MCF 10A (cell line): ENCODE measurements at regions of chr17 and their contacts with region 1.

Region 1: DNA sequence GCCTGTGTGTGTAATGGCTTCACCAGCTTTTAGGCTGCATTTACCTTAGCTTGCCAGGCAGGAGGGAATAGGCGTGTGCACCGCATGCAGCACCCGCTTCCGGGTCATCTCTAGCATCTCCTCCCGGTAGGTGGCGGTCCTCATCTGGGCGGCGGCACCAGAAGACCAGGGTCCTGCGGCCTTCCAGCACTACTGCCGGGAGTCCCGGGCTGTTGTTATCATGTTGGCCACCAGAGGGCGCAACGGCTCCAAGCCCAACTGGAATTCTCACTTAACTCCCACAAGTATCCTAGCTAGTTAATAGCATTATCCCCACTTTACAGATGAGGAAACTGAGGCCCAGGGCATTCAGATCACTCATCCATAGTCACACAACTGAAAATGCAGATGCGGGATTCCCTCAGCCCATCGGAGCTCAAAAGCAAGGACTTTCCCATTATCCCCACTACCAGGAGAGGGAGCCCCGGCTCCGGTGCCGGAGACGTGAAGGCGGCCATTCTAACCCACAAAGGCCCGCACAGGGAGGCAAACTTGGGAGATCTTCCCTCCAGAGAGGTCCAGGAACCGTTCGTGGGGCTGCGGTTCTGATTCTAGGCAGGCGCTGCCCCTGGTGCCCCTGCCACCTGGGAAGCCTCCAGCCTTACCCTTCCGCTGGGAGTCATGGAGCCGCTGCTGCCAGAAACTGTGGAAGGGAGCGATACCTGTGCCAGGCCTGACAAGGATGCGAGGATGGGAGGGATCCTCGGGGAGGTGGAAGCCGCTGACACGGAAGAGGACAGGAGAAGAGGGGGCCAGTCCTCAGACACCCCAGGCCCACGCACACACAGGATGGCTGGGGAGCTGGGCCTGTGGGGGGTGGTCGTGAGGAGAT is 23.9 kb downstream of the LGALS9 start:
- DNase-seq: peak; percentile 65
- H3K4me3 Mint-ChIP-seq: no peak overlapping the region
- H3K27ac Mint-ChIP-seq: no peak overlapping the region
- H3K4me1 Mint-ChIP-seq: no peaks in the 10 kb centered on the region
- H3K27me3 Mint-ChIP-seq: peaks cover 13% of the 10 kb centered on the region
- CTCF ChIP-seq: peak; percentile 93

Region 2: DNA sequence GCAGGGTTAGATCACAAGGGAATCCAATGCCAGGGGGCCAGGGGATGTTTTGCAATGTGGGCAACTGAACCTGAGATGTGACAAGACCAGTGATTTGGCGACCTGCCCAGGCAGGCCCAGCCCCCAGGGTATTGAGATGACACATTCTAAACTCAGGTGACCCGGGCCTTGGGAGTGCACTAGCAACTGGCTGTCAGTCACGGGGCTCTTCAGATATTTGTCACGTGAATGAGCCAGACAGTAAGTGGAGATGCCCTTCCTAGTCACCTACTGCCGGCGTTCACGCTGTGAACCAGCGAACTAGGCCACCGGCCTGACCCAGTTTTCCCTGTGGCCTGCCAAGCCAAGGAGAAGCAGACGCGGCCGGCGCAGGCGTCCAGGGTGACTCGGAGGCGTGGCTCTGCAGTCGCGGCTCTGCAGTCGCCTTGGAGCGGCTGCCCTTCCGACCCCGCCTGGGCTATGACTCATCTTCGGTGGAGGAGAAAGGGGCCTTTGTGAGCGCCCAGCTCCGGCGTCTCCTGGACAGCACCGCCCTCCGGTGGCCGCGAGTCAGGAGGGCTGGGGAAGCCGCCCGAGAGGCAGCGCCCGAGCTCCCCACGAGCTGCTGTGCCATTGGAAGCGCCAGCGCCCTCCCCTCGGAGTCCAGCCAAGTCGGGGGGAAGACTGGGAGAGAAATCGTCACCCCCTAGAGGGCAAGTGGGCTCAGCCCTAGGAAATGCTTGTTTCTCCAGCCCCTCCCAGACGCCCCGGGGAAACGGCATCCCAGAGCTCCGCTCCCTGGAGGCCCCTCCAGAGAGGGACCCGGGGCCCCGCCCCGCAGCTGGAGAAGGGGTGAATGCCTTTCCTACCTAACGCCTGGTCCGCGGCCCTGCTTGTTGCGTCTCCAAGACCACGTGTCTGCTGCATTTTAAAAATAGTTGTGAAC is 322.1 kb before region 1 on chr17:
- CTCF ChIA-PET with region 1: interaction called, 6 read pairs
- POLR2A ChIA-PET with region 1: no interaction called
- intact Hi-C with region 1: loop called (anchors 1 kb)
- DNase-seq: peak; percentile 98
- H3K4me3 Mint-ChIP-seq: peak overlapping the region; percentile 71
- H3K27ac Mint-ChIP-seq: peak overlapping the region; percentile 79
- H3K4me1 Mint-ChIP-seq: peaks cover 34% of the 10 kb centered on the region
- H3K27me3 Mint-ChIP-seq: no peaks in the 10 kb centered on the region
- CTCF ChIP-seq: peak; percentile 98

Region 3: DNA sequence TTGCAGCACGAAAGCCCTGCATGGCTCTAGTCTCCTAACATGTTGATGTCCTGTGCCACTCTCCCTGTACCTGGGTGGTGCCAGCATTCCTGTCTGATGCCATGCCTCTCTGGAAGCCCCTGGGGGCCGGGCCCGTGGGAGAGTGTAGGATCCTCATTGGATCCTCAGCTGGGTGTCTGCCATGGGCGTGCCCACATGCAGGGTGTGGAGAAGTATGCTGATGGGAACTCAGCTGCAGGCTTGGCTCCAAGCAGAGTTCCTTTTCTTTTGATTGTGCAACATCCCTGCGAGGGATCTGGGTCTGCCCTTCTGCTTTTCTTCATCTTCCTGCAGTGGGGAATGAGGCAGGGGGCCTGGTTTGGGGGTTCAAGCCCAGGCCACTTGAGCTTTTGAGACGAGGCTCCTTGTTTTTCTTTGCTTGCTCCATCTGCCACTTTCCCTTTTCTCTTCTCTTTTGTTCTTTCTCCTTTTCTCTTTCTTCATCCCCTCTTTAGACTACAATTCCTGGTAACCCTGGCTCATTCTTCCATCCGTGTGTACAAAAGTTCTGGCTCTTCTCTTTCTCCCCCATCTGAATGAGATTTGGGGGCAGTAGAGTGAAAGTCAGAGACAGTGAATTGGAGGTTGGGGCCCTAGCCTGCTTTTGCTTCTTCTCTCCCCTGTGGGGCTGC is 165.7 kb before region 1 on chr17:
- CTCF ChIA-PET with region 1: no interaction called
- POLR2A ChIA-PET with region 1: no interaction called
- intact Hi-C with region 1: no loop called
- DNase-seq: peak; percentile 87
- H3K4me3 Mint-ChIP-seq: peak overlapping the region; percentile 1
- H3K27ac Mint-ChIP-seq: peak overlapping the region; percentile 20
- H3K4me1 Mint-ChIP-seq: peaks cover 27% of the 10 kb centered on the region
- H3K27me3 Mint-ChIP-seq: no peaks in the 10 kb centered on the region
- CTCF ChIP-seq: no peak

Region 4: GRCh38 chr17:27552469-27552779 is 102.5 kb before region 1 on chr17:
- CTCF ChIA-PET with region 1: no interaction called
- POLR2A ChIA-PET with region 1: no interaction called
- intact Hi-C with region 1: no loop called
- DNase-seq: peak; percentile 94
- H3K4me3 Mint-ChIP-seq: no peak overlapping the region
- H3K27ac Mint-ChIP-seq: peak overlapping the region; percentile 20
- H3K4me1 Mint-ChIP-seq: peaks cover 30% of the 10 kb centered on the region
- H3K27me3 Mint-ChIP-seq: no peaks in the 10 kb centered on the region
- CTCF ChIP-seq: no peak

Region 5: GRCh38 chr17:27630607-27631410 is 24.1 kb before region 1 on chr17 and contains the start of gene LGALS9:
- CTCF ChIA-PET with region 1: interaction called, 19 read pairs
- POLR2A ChIA-PET with region 1: no interaction called
- intact Hi-C with region 1: no loop called
- DNase-seq: no peak
- H3K4me3 Mint-ChIP-seq: no peak within 1 kb of the TSS
- H3K27ac Mint-ChIP-seq: peak within 1 kb of the TSS; percentile 5
- H3K4me1 Mint-ChIP-seq: peaks cover 23% of the 10 kb centered on the region
- H3K27me3 Mint-ChIP-seq: no peaks in the 10 kb centered on the region
- CTCF ChIP-seq: no peak
- total RNA-seq, gene LGALS9: 0.44 and 0.54 TPM in 2 replicates

Region 6: GRCh38 chr17:27666831-27667560 is 12.1 kb after region 1 on chr17:
- CTCF ChIA-PET with region 1: interaction called, 63 read pairs
- POLR2A ChIA-PET with region 1: no interaction called
- intact Hi-C with region 1: no loop called
- DNase-seq: no peak
- H3K4me3 Mint-ChIP-seq: no peak overlapping the region
- H3K27ac Mint-ChIP-seq: no peak overlapping the region
- H3K4me1 Mint-ChIP-seq: no peaks in the 10 kb centered on the region
- H3K27me3 Mint-ChIP-seq: peaks cover 20% of the 10 kb centered on the region
- CTCF ChIP-seq: no peak

Region 7: GRCh38 chr17:27760069-27760885 is 105.4 kb after region 1 on chr17:
- CTCF ChIA-PET with region 1: interaction called, 377 read pairs
- POLR2A ChIA-PET with region 1: no interaction called
- intact Hi-C with region 1: no loop called
- DNase-seq: peak; percentile 51
- H3K4me3 Mint-ChIP-seq: no peak overlapping the region
- H3K27ac Mint-ChIP-seq: no peak overlapping the region
- H3K4me1 Mint-ChIP-seq: no peaks in the 10 kb centered on the region
- H3K27me3 Mint-ChIP-seq: peaks cover 11% of the 10 kb centered on the region
- CTCF ChIP-seq: peak; percentile 96

Region 8: DNA sequence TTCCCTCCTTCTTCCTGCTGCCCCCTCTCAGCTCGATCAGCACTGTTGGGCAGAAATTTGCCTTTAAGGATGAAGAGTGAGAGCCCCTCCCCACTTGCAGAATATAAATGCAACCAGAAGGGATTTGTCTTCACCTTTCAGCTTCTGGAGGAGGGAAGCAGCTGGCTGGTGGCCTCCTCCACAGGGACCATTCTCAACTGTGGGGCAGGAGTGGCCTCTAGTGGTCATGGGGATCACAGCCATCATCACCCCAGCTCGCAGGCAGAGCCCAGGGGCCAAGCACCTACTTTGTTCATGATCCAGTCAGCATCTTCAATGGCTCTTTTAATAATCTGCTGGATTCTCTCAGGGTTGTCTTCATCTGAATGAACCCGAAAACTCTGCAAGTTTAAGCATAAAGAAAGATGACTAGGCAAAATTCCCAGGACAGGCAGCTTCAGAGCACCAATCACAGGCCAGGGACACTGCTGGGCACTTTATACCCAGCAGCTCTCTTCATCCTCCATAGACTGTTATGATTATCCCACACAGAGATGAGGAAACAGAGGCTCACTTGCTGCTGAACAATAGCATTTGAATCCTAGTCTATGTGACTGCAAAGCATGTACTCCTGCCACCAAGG is 225.2 kb after region 1 on chr17:
- CTCF ChIA-PET with region 1: interaction called, 19 read pairs
- POLR2A ChIA-PET with region 1: interaction called, 3 read pairs
- intact Hi-C with region 1: loop called (anchors 1 kb)
- DNase-seq: peak; percentile 77
- H3K4me3 Mint-ChIP-seq: no peak overlapping the region
- H3K27ac Mint-ChIP-seq: no peak overlapping the region
- H3K4me1 Mint-ChIP-seq: no peaks in the 10 kb centered on the region
- H3K27me3 Mint-ChIP-seq: no peaks in the 10 kb centered on the region
- CTCF ChIP-seq: peak; percentile 89